ENCODE measurements at regions of chr19 and their contacts with region 1.

Region 1: DNA sequence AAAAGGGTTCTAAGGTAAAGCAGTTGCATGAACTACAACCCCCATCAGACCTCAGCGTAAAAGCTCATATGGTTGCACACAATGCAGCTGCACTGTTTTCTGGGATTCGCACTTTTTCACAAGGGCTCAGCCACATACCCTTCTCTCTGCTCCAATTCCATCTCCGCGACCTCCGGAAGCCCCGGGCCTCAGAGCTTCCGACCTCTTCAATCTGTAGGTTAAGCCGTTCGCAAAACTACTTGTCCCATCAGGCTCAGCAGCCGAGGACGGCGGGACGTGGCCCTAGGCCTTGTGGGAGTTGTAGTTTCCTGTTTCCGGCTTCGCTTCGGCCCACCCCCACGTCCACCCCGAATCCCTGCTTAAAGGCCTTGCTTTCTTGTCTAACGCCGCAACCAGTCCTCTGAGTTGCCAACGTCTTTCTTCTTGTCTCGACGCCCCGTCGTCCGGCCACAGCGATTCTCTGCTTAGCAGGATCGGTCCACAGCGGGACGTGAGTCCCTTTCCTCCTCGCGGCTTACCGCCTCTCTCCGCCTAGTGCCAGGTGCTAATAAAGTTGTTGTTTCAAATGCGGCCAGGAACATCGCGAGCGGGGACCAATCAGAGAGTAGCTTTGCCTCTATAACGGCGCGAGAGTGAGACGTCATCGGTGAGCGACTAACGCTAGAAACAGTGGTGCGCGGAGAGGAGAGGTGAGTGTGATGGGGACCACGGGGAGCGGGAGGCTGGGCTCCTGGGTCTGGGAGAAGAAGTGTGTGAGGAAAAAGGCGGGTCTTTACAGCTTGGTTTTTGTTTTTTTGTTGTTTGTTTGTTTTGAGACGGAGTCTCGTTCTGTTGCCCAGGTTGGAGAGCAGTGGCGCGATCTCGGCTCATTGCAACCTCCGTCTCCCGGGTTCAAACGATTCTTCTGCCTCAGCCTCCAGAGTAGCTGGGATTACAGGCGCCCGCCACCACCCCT is at the starts of genes PRPF31 and TFPT:
- DNase-seq: peak; percentile 87 to 96
- H3K4me3 ChIP-seq: peak within 1 kb of the TSS; percentile 74 to 100 (median 94)
- H3K27ac ChIP-seq: peak within 1 kb of the TSS; percentile 92
- H3K4me1 ChIP-seq: peaks cover 0 to 7% (median 2%) of the 10 kb centered on the region in 4 experiments; a peak in 3 of 7 replicates
- H3K27me3 ChIP-seq: no peaks in the 10 kb centered on the region
- CTCF ChIP-seq: no peak
- EP300 ChIP-seq: 0 out of 3 replicates have a peak, but pooled peaks of 1 of the 2 experiments have one; percentile 53
- POLR2A ChIP-seq: peak in 1 of 2 experiments; percentile 86; a peak in 2 of 3 replicates
- RAD21 ChIP-seq: no peak
- total RNA-seq, gene PRPF31: 89.5 and 97.4 TPM in 2 replicates
- total RNA-seq, gene TFPT: 17.7 TPM in 2 replicates

Region 2: GRCh38 chr19:54096617-54097129 is 18.7 kb before region 1 on chr19:
- CTCF ChIA-PET with region 1: interaction called, 4 read pairs
- POLR2A ChIA-PET with region 1: interaction called, 116 read pairs
- DNase-seq: peak in 1 of 2 experiments; percentile 62
- H3K4me3 ChIP-seq: peak overlapping the region; percentile 9 to 64 (median 32); a peak in 7 of 8 replicates
- H3K27ac ChIP-seq: no peak overlapping the region
- H3K4me1 ChIP-seq: peaks cover 0 to 5% (median 1%) of the 10 kb centered on the region in 4 experiments; a peak in 4 of 7 replicates
- H3K27me3 ChIP-seq: peaks cover 6 to 29% (median 19%) of the 10 kb centered on the region in 4 experiments
- CTCF ChIP-seq: peak in 1 of 3 experiments; percentile 18; a peak in 1 of 4 replicates
- EP300 ChIP-seq: no peak
- POLR2A ChIP-seq: no peak
- RAD21 ChIP-seq: peak in 1 of 2 experiments; percentile 23; a peak in 1 of 4 replicates

Region 3: DNA sequence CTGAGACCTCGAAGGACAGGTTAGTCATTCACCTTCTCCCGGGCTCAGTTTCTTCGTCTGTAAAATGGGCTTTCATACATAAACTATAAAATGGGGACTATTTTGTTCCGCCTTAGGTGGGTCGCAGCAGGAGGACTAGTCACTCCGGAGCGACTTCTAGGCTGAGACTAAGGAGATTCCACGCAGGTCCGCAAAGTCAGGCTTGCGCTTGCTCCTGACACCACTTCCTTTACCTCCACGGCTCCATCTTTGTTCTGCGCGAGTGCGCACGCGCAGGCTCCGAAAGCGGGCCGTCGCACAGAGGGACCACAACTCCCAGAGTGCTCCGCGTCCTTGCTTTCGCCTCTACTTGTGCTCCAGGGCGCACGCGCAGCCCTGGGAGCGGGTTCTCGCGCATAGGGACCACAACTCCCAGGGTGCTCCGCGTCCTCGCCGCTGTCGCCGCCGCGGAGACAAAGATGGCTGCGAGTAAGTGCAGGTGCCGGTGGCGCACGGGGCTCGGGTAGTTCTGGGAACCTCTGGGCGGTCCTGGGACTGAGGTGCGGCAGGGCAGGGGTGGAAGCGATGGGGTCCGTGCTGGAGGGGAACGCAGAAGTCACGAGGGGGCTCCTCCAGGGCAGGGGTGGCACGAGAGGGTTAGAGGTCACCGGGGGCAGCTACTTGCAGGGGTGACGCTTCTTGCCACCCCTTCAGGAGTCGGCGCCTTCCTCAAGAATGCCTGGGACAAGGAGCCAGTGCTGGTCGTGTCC is 12.8 kb before region 1 on chr19 and contains the start of gene NDUFA3:
- CTCF ChIA-PET with region 1: interaction called, 3 read pairs
- POLR2A ChIA-PET with region 1: interaction called, 116 read pairs
- DNase-seq: peak; percentile 95 to 96
- H3K4me3 ChIP-seq: peak within 1 kb of the TSS; percentile 78 to 96 (median 90)
- H3K27ac ChIP-seq: peak within 1 kb of the TSS; percentile 82; the same call in 1 of the 2 replicates
- H3K4me1 ChIP-seq: 0 out of 7 replicates have a peak, but pooled peaks cover 0 to 2% (median 0%) of the 10 kb centered on the region in 4 experiments
- H3K27me3 ChIP-seq: no peaks in the 10 kb centered on the region
- CTCF ChIP-seq: no peak
- EP300 ChIP-seq: no peak
- POLR2A ChIP-seq: peak in 1 of 2 experiments; percentile 85; a peak in 2 of 3 replicates
- RAD21 ChIP-seq: no peak
- total RNA-seq, gene NDUFA3: 175 and 177 TPM in 2 replicates

Region 4: GRCh38 chr19:54127688-54128440 is 12.5 kb after region 1 on chr19:
- CTCF ChIA-PET with region 1: interaction called, 3 read pairs
- POLR2A ChIA-PET with region 1: interaction called, 40 read pairs
- DNase-seq: no peak
- H3K4me3 ChIP-seq: no peak overlapping the region
- H3K27ac ChIP-seq: no peak overlapping the region
- H3K4me1 ChIP-seq: no peaks in the 10 kb centered on the region
- H3K27me3 ChIP-seq: no peaks in the 10 kb centered on the region
- CTCF ChIP-seq: no peak
- EP300 ChIP-seq: no peak
- POLR2A ChIP-seq: no peak
- RAD21 ChIP-seq: no peak

Region 5: DNA sequence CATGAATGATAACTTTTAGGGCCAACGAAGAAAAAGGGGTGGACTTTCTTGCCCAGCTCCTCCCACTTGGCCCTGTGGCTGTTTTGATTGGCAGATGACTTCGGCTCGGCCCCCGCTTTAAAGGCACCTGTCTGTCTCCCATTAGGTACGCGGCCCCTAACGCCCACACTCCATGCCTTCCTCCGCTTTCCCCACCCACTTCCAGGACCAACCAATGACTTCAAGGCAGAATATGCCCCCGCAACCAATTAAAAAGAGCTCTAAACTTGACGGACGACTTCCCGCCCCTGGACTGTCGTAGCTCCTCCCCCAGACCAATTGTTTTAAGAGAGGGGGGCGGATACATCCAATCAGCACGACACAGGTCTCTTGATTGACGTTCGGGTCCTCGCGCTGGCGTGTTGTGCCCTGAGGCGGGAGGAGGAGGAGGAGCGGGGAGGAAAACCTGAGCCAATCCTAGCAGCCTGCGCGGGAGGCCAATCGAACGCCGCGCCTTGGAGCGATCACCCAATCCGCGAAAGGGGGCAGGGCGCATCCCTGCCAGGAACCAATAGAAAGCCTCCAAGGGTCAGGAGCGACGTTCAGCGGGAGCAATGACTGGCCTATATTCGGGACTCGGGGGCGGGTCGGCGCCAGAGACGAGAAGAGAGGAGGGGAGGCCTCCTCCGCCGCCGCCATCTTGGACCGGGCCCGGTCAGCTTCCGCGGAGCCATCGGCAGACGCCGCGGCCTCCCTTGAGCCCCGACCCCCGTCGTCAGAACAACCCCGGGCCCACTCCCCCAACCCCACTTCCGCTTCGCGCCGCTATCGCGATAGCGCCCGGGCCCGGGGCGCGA is 21.9 kb after region 1 on chr19 and contains the start of gene CNOT3:
- CTCF ChIA-PET with region 1: interaction called, 3 read pairs
- POLR2A ChIA-PET with region 1: interaction called, 82 read pairs
- DNase-seq: peak; percentile 95 to 100
- H3K4me3 ChIP-seq: peak within 1 kb of the TSS; percentile 68 to 84 (median 84)
- H3K27ac ChIP-seq: peak within 1 kb of the TSS; percentile 90
- H3K4me1 ChIP-seq: peaks cover 0 to 26% (median 7%) of the 10 kb centered on the region in 4 experiments; a peak in 5 of 7 replicates
- H3K27me3 ChIP-seq: no peaks in the 10 kb centered on the region
- CTCF ChIP-seq: no peak; a peak in 1 of 4 replicates
- EP300 ChIP-seq: no peak
- POLR2A ChIP-seq: peak; percentile 89
- RAD21 ChIP-seq: no peak
- total RNA-seq, gene CNOT3: 82.9 and 86.4 TPM in 2 replicates

Region 6: DNA sequence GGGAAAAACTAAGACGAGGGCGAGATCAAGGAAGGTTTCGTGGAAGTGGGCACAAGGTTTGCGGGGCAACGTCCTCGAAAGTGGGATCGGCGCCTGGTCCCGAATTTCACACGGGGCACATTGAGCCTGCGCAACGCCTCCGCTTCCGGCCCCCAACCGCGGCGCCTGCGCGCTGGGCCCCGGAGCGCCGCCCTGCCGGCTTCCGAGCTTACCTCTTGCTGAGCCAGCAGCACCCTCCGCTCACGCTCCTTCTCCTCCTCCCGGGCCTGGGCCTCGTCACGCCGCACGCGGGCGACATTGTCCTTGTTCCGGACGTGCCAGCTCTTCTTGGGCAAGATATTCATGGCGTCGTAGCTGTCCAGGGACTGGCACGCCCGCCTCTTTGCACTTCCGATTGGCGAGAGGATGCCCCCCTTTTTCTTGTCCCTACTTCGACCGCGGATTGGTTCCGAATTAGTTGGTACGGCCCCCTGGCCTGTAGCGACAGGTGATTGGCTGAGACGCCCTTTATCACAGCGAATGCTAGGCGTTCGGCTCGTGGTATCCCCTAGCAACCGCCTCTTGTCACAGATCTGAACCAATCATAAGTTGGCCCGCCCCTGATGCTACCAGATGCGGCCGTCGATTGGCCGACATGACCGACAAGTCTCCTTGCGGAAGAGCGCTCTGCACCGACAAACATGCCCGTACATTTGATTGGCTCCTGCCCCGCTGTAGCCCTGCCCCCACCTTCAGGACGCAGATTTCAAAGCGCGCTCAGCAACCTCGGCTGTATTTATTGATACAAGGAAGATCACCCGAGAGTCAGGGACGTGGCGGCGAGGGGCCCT is 44.2 kb after region 1 on chr19 and contains the start of gene LENG1:
- CTCF ChIA-PET with region 1: no interaction called
- POLR2A ChIA-PET with region 1: interaction called, 11 read pairs
- DNase-seq: peak; percentile 93 to 100
- H3K4me3 ChIP-seq: peak within 1 kb of the TSS; percentile 81 to 96 (median 88)
- H3K27ac ChIP-seq: peak within 1 kb of the TSS; percentile 84
- H3K4me1 ChIP-seq: peaks cover 0 to 24% (median 11%) of the 10 kb centered on the region in 4 experiments; a peak in 6 of 7 replicates
- H3K27me3 ChIP-seq: peaks cover 0 to 8% (median 4%) of the 10 kb centered on the region in 4 experiments; a peak in 4 of 7 replicates
- CTCF ChIP-seq: peak in 2 of 3 experiments; percentile 25 to 31; a peak in 3 of 4 replicates
- EP300 ChIP-seq: no peak; a peak in 1 of 3 replicates
- POLR2A ChIP-seq: peak; percentile 74 to 76; a peak in 2 of 3 replicates
- RAD21 ChIP-seq: no peak
- total RNA-seq, gene LENG1: 4.4 and 4.6 TPM in 2 replicates